Mammary epithelial cell (primary cell): ENCODE measurements at regions of chr1 and their contacts with region 1.

Region 1: GRCh38 chr1:153617675-153618074 is 1.6 kb upstream of the S100A14 start:
- DNase-seq: peak; percentile 71
- H3K4me3 ChIP-seq: no peak overlapping the region
- H3K27ac ChIP-seq: peak overlapping the region; percentile 57
- H3K4me1 ChIP-seq: peaks cover 33% of the 10 kb centered on the region
- H3K27me3 ChIP-seq: no peaks in the 10 kb centered on the region
- CTCF ChIP-seq: peak; percentile 33 to 67

Region 2: GRCh38 chr1:153633716-153634665 is 16.3 kb after region 1 on chr1 and contains the start of gene CHTOP:
- CTCF ChIA-PET with region 1: no interaction called
- dilution Hi-C with region 1: no loop called
- in situ Hi-C with region 1: no loop called
- intact Hi-C with region 1: loop called (anchors 2 kb)
- DNase-seq: peak; percentile 96
- H3K4me3 ChIP-seq: peak within 1 kb of the TSS; percentile 74 to 100 (median 90)
- H3K27ac ChIP-seq: peak within 1 kb of the TSS; percentile 97
- H3K4me1 ChIP-seq: peaks cover 9% of the 10 kb centered on the region
- H3K27me3 ChIP-seq: no peaks in the 10 kb centered on the region
- CTCF ChIP-seq: no peak
- total RNA-seq, gene CHTOP: 36.0 to 64.5 TPM

Region 3: GRCh38 chr1:153658400-153659174 is 40.9 kb after region 1 on chr1 and contains the start of gene SNAPIN:
- CTCF ChIA-PET with region 1: no interaction called
- dilution Hi-C with region 1: no loop called
- in situ Hi-C with region 1: no loop called
- intact Hi-C with region 1: loop called (anchors 2 kb)
- DNase-seq: peak; percentile 83
- H3K4me3 ChIP-seq: peak within 1 kb of the TSS; percentile 70 to 93 (median 75)
- H3K27ac ChIP-seq: peak within 1 kb of the TSS; percentile 82
- H3K4me1 ChIP-seq: peaks cover 13% of the 10 kb centered on the region
- H3K27me3 ChIP-seq: no peaks in the 10 kb centered on the region
- CTCF ChIP-seq: peak in 1 of 2 donors; percentile 29
- total RNA-seq, gene SNAPIN: 33.1 to 39.8 TPM